Transverse colon (tissue), 4 donors: ENCODE measurements at regions of chr14 and their contacts with region 1.

Region 1: DNA sequence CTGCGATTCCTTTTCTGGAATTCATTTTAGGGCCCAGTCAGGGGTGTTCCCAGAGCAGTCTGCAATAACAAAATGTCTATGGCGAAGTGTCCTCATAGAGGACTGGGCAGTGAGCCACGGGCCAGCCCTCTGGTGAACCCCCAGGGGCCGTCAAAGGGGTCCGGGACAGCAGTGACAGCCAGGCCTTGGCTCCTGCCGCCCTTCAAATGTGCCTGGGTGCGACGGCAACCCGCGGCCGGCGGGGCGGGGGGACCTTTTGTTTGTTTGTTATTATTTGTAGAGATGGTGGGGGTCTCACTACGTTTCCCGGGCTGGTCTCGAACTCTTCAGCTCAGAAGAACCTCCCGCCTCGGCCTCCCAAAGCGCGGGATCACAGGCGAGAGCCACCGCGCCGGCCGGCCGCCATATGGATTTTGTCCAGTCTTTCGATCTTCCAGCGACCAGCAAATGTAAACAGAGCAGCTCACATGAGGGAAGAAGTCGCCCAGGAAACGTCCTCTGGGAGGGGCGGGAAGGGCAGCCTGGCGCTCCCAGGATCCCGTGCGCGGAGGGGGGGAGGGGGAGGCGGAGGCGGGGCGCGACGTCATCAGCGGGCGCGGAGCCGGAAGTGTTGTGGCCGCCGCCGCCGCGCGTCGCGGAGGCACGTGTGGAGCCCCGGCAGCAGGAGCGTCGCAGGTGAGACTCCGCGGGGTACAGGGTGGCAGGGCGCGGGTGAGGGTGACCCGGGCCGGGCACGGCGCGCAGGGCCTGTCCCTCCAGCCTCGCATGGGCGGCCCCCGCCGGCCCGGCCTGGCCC is at the start of gene TRMT61A:
- DNase-seq: peak; percentile 91
- H3K4me3 ChIP-seq: peak within 1 kb of the TSS; percentile 61 to 98 (median 84)
- H3K27ac ChIP-seq: peak within 1 kb of the TSS; percentile 89 to 95 (median 94)
- H3K4me1 ChIP-seq: peaks cover 41 to 77% (median 68%) of the 10 kb centered on the region in 4 donors
- H3K27me3 ChIP-seq: no peaks in the 10 kb centered on the region
- CTCF ChIP-seq: no peak
- EP300 ChIP-seq: no peak
- POLR2A ChIP-seq: peak; percentile 78
- total RNA-seq, gene TRMT61A: 12.2 to 38.2 (median 14.1) TPM

Region 2: GRCh38 chr14:103074699-103075355 is 454.0 kb before region 1 on chr14:
- in situ Hi-C with region 1: no loop called
- intact Hi-C with region 1: no loop called
- DNase-seq: peak; percentile 77
- H3K4me3 ChIP-seq: peak overlapping the region in 3 of 4 donors; percentile 15 to 49 (median 36)
- H3K27ac ChIP-seq: peak overlapping the region; percentile 37 to 65 (median 51)
- H3K4me1 ChIP-seq: peaks cover 18 to 43% (median 29%) of the 10 kb centered on the region in 4 donors
- H3K27me3 ChIP-seq: no peaks in the 10 kb centered on the region
- CTCF ChIP-seq: no peak
- EP300 ChIP-seq: no peak
- POLR2A ChIP-seq: no peak

Region 3: DNA sequence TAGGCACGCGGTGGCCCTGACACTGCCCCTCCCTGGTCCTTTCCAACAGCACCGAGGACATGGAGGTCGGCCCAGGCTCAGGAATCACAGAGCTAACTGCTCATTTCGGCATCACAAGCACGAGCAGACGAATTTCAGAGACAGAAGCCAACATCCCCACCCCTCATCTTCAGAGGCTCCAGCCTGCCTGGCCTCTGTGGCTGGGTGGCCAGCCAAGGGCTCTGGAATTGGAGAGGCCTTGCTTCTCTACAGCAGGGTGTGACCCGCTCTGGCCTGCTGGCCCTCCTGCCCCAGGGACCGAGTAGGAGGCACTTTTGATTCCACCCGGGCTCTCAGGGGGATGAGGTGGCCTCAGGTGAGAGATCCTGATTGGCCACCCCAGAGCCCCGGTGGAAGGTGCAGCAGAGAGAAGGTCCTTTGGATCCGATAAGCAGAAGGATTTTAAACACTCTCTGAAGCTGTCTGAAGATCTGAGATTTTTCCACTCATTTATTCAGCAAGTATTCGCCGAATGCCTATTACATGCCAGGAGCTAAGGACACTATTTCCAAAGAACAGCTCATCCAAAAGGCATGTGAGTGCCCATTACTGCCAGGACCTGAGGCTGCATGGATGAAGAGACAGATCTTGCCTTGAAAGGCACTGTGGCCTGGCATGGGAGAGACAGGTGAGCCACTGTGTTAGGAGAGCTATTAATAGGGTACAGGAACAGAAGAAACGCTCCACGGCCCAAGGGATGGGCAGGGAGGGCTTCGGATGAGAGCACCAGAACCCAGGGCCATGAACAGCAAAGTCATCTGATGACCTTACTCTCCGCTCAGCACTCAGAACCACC is 23.4 kb after region 1 on chr14:
- in situ Hi-C with region 1: no loop called
- intact Hi-C with region 1: loop called (anchors 1 kb)
- DNase-seq: no peak
- H3K4me3 ChIP-seq: no peak overlapping the region
- H3K27ac ChIP-seq: peak overlapping the region; percentile 72 to 89 (median 82)
- H3K4me1 ChIP-seq: peaks cover 23 to 44% (median 28%) of the 10 kb centered on the region in 4 donors
- H3K27me3 ChIP-seq: no peaks in the 10 kb centered on the region
- CTCF ChIP-seq: no peak
- EP300 ChIP-seq: no peak
- POLR2A ChIP-seq: no peak